GM23248 (cell line): ENCODE measurements at regions of chr6 and their contacts with region 1.

Region 1: GRCh38 chr6:100479179-100480035 is 14.7 kb upstream of the SIM1 start:
- DNase-seq: peak; percentile 61
- H3K4me3 ChIP-seq: no peak overlapping the region
- H3K27ac ChIP-seq: no peak overlapping the region
- H3K4me1 ChIP-seq: no peaks in the 10 kb centered on the region; the same call in 1 of the 2 replicates
- H3K27me3 ChIP-seq: no peaks in the 10 kb centered on the region

Region 2: DNA sequence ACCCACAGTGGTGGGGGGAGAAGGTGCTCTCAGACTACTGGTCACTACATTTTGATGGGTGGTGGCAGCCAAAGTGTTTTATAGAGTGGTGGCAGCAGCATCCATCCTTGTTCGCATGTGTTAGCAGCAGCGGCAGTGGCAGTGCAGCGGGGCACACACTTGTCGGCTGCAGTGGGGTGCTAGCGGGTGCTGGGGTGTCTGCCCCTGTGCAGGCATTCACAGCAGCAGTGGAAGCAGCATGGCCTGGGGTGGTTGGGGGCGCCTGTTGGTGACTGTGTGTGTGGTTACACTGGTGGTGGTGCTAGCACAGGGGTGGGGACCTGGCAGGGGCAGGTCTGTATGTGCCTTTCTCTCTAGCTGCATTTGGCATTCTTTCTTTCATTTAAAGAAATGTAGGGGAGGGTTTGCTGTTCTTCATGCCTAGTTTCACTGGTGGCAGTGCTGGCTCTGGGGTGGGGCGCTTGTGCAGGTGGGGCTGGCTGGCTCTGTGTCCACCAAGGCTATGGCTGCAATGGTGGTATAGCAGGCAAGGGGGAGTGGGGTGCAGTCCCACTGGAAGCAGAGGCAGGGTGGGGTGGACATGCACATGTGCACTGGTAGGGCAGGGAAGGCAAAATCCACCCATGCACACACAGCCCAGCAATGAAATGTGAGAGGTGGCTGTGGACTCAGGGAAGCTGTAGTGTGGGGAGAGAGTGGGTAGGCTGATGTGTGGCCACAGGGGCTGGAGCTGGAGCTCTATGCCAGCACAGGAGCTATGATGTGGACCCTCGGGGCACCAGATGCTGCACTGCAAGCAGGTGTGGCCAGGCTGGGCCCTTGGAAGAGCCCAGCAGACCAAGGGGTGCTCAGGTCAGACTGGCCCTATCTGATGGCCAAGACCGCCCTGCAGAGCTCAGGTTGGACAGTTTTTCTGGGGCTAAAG is 699.5 kb before region 1 on chr6:
- in situ Hi-C with region 1: no loop called
- DNase-seq: no peak
- H3K4me3 ChIP-seq: no peak overlapping the region
- H3K27ac ChIP-seq: no peak overlapping the region
- H3K4me1 ChIP-seq: no peaks in the 10 kb centered on the region
- H3K27me3 ChIP-seq: no peaks in the 10 kb centered on the region

Region 3: GRCh38 chr6:99905209-99906106 is 573.9 kb before region 1 on chr6:
- in situ Hi-C with region 1: loop called (anchors 25 kb)
- DNase-seq: peak; percentile 73
- H3K4me3 ChIP-seq: no peak overlapping the region
- H3K27ac ChIP-seq: no peak overlapping the region
- H3K4me1 ChIP-seq: no peaks in the 10 kb centered on the region
- H3K27me3 ChIP-seq: no peaks in the 10 kb centered on the region

Region 4: GRCh38 chr6:100116411-100117194 is 362.8 kb before region 1 on chr6:
- in situ Hi-C with region 1: loop called (anchors 5 kb)
- DNase-seq: peak; percentile 78
- H3K4me3 ChIP-seq: no peak overlapping the region
- H3K27ac ChIP-seq: no peak overlapping the region
- H3K4me1 ChIP-seq: peaks cover 8% of the 10 kb centered on the region
- H3K27me3 ChIP-seq: no peaks in the 10 kb centered on the region

Region 5: DNA sequence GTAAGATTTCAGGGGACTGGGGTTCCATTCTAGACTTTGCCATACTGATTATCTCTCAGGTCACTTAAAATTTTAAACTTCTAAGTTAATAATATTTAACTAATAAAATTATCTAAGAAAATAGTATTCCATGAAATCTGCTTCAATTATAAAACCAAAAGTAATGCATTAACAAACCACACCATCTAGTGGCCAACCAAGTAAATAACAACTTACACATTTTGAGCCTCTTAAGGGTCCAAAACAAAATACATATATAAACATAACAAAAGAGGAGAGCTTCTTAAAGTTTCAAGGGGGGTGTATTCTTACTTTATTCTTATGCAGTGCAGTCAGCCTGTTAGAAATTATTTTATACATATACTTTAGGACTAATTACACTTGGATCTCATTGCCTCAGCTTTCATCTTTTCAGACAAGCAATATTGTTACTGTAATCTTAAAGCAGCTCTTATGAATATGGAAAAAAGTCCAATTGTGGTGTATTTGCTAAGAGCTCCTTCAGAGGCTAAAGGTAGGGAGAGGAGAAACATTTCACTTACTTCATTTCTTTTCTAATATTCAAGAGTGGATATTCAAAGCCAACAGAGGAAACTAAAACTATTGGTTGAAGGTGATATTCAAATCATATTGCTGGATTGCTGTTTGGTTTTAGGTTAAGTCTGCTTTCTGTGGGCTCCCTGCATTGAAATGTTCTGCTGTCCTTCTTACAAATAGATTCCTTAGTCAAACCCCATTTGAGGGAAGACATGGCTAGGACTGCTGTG is 185.1 kb after region 1 on chr6:
- in situ Hi-C with region 1: loop called (anchors 25 kb)
- DNase-seq: peak; percentile 56
- H3K4me3 ChIP-seq: no peak overlapping the region
- H3K27ac ChIP-seq: peak overlapping the region; percentile 85
- H3K4me1 ChIP-seq: peaks cover 23% of the 10 kb centered on the region
- H3K27me3 ChIP-seq: no peaks in the 10 kb centered on the region

Region 6: GRCh38 chr6:100740439-100740838 is 261.0 kb after region 1 on chr6:
- in situ Hi-C with region 1: no loop called
- DNase-seq: no peak
- H3K4me3 ChIP-seq: no peak overlapping the region
- H3K27ac ChIP-seq: no peak overlapping the region
- H3K4me1 ChIP-seq: no peaks in the 10 kb centered on the region
- H3K27me3 ChIP-seq: no peaks in the 10 kb centered on the region